ENCODE measurements at regions of chr6 and their contacts with region 1.

Region 1: DNA sequence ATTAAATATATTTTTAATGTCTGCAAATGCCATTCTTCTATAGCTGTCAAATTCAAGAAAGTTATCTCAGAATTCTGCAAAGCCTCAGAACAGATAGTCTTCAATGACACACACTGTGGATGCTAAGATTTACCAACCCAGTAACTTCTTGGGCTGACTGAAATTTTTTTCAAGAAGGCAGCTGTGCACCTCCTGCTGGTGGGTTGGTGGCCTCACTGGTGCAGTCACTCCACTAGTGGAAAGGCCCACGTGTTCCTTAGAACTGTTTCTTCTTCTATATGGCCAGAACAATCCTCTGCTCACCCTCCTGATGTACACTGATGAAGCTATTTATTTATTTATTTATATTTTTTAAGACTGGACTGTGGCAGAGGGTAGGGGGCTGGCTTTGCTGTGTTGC is 28.1 kb upstream of the MTCL3 start:
- DNase-seq: no peak
- H3K4me3 ChIP-seq: no peak overlapping the region
- H3K27ac ChIP-seq: no peak overlapping the region
- H3K4me1 ChIP-seq: no peaks in the 10 kb centered on the region
- H3K27me3 ChIP-seq: peaks cover 0 to 7% (median 0%) of the 10 kb centered on the region in 7 donors
- CTCF ChIP-seq: peak in 2 of 11 experiments; percentile 9 to 16
- POLR2A ChIP-seq: no peak

Region 2: DNA sequence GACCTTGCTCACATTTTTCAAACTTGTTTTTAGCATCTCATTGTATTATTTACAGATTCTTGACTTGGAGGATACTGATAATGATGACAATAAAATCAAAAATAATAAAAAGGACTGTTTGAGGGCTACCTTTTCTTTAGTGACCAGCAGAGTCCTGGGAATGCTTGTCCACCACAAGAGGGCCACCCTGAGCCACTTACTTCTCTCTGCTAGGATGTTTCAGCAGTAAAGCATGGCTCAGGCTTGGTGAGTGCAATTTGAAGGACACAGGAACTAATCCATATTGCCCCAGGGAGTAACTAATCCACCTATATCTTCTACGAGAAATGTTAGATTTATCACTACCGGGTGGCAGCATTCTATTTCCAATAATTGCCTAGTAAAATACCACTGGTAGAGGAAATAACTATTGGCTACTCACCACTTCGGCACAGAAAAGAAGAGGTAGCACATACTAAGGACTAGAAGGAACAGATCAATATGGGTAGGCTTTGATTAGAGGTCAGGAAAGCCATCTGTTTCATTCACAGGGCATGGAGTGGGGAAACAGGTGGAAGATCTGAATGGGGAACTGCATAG is 82.2 kb before region 1 on chr6:
- intact Hi-C with region 1: loop called (anchors 10 kb)
- DNase-seq: no peak
- H3K4me3 ChIP-seq: no peak overlapping the region
- H3K27ac ChIP-seq: no peak overlapping the region
- H3K4me1 ChIP-seq: no peaks in the 10 kb centered on the region
- H3K27me3 ChIP-seq: no peaks in the 10 kb centered on the region
- CTCF ChIP-seq: peak in 10 of 11 experiments; percentile 46 to 78 (median 66)
- POLR2A ChIP-seq: no peak

Region 3: GRCh38 chr6:127496471-127496870 is 50.7 kb before region 1 on chr6:
- intact Hi-C with region 1: no loop called
- DNase-seq: no peak
- H3K4me3 ChIP-seq: no peak overlapping the region
- H3K27ac ChIP-seq: no peak overlapping the region
- H3K4me1 ChIP-seq: no peaks in the 10 kb centered on the region
- H3K27me3 ChIP-seq: no peaks in the 10 kb centered on the region
- CTCF ChIP-seq: no peak
- POLR2A ChIP-seq: no peak

Region 4: GRCh38 chr6:127690092-127690491 is 142.9 kb after region 1 on chr6:
- intact Hi-C with region 1: no loop called
- DNase-seq: no peak
- H3K4me3 ChIP-seq: no peak overlapping the region
- H3K27ac ChIP-seq: no peak overlapping the region
- H3K4me1 ChIP-seq: no peaks in the 10 kb centered on the region
- H3K27me3 ChIP-seq: no peaks in the 10 kb centered on the region
- CTCF ChIP-seq: no peak
- POLR2A ChIP-seq: no peak

Region 5: GRCh38 chr6:128005009-128005408 is 457.8 kb after region 1 on chr6:
- intact Hi-C with region 1: no loop called
- DNase-seq: no peak
- H3K4me3 ChIP-seq: no peak overlapping the region
- H3K27ac ChIP-seq: no peak overlapping the region
- H3K4me1 ChIP-seq: no peaks in the 10 kb centered on the region
- H3K27me3 ChIP-seq: no peaks in the 10 kb centered on the region
- CTCF ChIP-seq: no peak
- POLR2A ChIP-seq: no peak